Activated CD4-positive, alpha-beta memory T cell treated with anti-CD3 and anti-CD28 coated beads for 36 hours (primary cell): ENCODE measurements at regions of chr5 and their contacts with region 1.

Region 1: GRCh38 chr5:42767491-42768105 is 11.0 kb downstream of the CCDC152 start:
- DNase-seq: no peak
- H3K4me3 Mint-ChIP-seq: no peak overlapping the region
- H3K27ac Mint-ChIP-seq: no peak overlapping the region
- H3K4me1 Mint-ChIP-seq: no peaks in the 10 kb centered on the region
- H3K27me3 Mint-ChIP-seq: peaks cover 5% of the 10 kb centered on the region

Region 2: GRCh38 chr5:42423285-42424165 is 344.1 kb before region 1 on chr5 and contains the start of gene GHR:
- CTCF ChIA-PET with region 1: interaction called, 13 read pairs
- POLR2A ChIA-PET with region 1: no interaction called
- intact Hi-C with region 1: no loop called
- DNase-seq: peak; percentile 33
- H3K4me3 Mint-ChIP-seq: no peak within 1 kb of the TSS
- H3K27ac Mint-ChIP-seq: no peak within 1 kb of the TSS
- H3K4me1 Mint-ChIP-seq: no peaks in the 10 kb centered on the region
- H3K27me3 Mint-ChIP-seq: peaks cover 19% of the 10 kb centered on the region
- total RNA-seq, gene GHR: not detected

Region 3: GRCh38 chr5:42514754-42515153 is 252.8 kb before region 1 on chr5:
- CTCF ChIA-PET with region 1: interaction called, 10 read pairs
- POLR2A ChIA-PET with region 1: no interaction called
- intact Hi-C with region 1: no loop called
- DNase-seq: no peak
- H3K4me3 Mint-ChIP-seq: no peak overlapping the region
- H3K27ac Mint-ChIP-seq: no peak overlapping the region
- H3K4me1 Mint-ChIP-seq: no peaks in the 10 kb centered on the region
- H3K27me3 Mint-ChIP-seq: no peaks in the 10 kb centered on the region

Region 4: DNA sequence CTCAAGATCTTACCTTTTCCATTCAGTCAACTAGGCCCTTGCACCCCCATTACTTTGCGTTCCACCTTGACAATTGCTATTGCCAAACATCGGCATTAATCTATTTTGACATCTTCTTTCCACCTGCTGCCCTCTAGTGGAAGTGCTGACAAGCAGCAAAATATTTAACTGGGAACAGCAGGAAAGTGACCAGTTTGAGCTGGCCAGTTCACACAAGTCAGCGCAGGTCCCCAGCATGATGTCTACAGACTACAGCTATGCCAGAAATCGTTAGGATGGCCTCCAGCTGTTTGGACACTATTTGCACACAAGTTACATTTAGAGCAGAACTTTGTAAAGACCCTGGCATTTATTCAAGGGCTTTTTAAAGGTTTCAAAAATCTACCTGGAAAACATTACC is 184.3 kb before region 1 on chr5:
- CTCF ChIA-PET with region 1: interaction called, 15 read pairs
- POLR2A ChIA-PET with region 1: no interaction called
- intact Hi-C with region 1: loop called (anchors 2 kb)
- DNase-seq: peak; percentile 31
- H3K4me3 Mint-ChIP-seq: no peak overlapping the region
- H3K27ac Mint-ChIP-seq: no peak overlapping the region
- H3K4me1 Mint-ChIP-seq: peaks cover 2% of the 10 kb centered on the region
- H3K27me3 Mint-ChIP-seq: peaks cover 13% of the 10 kb centered on the region

Region 5: DNA sequence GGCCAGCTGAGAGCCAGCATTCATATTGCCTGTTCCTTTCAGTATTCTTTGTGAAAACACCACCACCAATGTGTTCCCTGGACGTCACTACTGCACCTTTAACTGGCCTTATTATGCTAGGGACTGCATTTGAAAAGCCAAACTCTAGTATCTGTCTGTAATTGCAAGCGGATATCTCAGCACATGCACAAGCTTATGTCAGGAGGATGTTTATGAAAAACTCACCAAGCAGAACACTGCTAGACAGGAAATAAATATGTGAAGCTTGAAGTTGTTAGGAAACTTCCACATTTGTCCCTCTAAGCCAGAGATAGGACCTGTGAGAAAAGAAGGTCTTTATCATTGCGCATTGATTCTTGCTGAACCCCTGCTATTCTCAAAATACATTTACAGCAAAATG is 146.4 kb before region 1 on chr5:
- CTCF ChIA-PET with region 1: no interaction called
- POLR2A ChIA-PET with region 1: no interaction called
- intact Hi-C with region 1: no loop called
- DNase-seq: no peak
- H3K4me3 Mint-ChIP-seq: no peak overlapping the region
- H3K27ac Mint-ChIP-seq: no peak overlapping the region
- H3K4me1 Mint-ChIP-seq: no peaks in the 10 kb centered on the region
- H3K27me3 Mint-ChIP-seq: peaks cover 9% of the 10 kb centered on the region